Prostate gland (tissue), 2 donors: ENCODE measurements at regions of chr3 and their contacts with region 1.

Region 1: DNA sequence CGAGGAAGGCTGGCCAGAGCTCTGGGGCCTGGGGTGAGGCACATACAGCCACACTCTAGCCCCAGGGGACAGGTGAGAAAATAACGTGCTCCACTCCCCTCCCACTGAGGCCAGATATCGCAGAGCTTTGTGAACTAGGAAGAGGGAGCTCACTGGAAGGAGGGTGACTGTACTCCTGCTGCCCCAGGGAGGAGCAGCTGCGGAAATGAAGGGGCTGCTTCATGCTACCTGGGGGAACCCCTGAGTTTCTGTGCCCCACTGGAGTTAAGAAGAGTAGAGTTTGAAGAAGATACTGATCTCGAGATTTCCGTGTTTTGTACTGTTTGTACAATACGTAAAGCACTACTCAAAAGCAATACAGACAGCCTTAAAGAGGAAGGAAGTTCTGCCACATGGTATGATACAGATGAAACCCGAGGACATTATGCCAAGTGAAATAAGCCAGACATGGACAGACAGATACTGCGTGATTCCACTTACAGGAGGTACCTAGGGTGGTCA is 44.6 kb downstream of the CMTM6 start:
- DNase-seq: no peak
- H3K4me3 ChIP-seq: no peak overlapping the region
- H3K27ac ChIP-seq: no peak overlapping the region
- H3K4me1 ChIP-seq: no peaks in the 10 kb centered on the region
- H3K27me3 ChIP-seq: no peaks in the 10 kb centered on the region
- CTCF ChIP-seq: no peak
- POLR2A ChIP-seq: no peak

Region 2: GRCh38 chr3:32296256-32297204 is 161.5 kb before region 1 on chr3:
- intact Hi-C with region 1: loop called (anchors 5 kb)
- DNase-seq: peak; percentile 40
- H3K4me3 ChIP-seq: no peak overlapping the region
- H3K27ac ChIP-seq: no peak overlapping the region
- H3K4me1 ChIP-seq: no peaks in the 10 kb centered on the region
- H3K27me3 ChIP-seq: no peaks in the 10 kb centered on the region
- CTCF ChIP-seq: peak; percentile 71 to 80 (median 78)
- POLR2A ChIP-seq: no peak

Region 3: GRCh38 chr3:32354362-32354778 is 103.7 kb before region 1 on chr3:
- intact Hi-C with region 1: no loop called
- DNase-seq: peak; percentile 11
- H3K4me3 ChIP-seq: no peak overlapping the region
- H3K27ac ChIP-seq: no peak overlapping the region
- H3K4me1 ChIP-seq: peaks cover 5% of the 10 kb centered on the region
- H3K27me3 ChIP-seq: no peaks in the 10 kb centered on the region
- CTCF ChIP-seq: no peak
- POLR2A ChIP-seq: no peak

Region 4: GRCh38 chr3:32406486-32407408 is 51.3 kb before region 1 on chr3:
- intact Hi-C with region 1: loop called (anchors 5 kb)
- DNase-seq: peak; percentile 80
- H3K4me3 ChIP-seq: no peak overlapping the region
- H3K27ac ChIP-seq: peak overlapping the region; percentile 30 to 39
- H3K4me1 ChIP-seq: no peaks in the 10 kb centered on the region
- H3K27me3 ChIP-seq: no peaks in the 10 kb centered on the region
- CTCF ChIP-seq: no peak
- POLR2A ChIP-seq: no peak